Activated CD4-positive, alpha-beta T cell treated with anti-CD3 and anti-CD28 coated beads for 36 hours (primary cell): ENCODE measurements at regions of chr19 and their contacts with region 1.

Region 1: DNA sequence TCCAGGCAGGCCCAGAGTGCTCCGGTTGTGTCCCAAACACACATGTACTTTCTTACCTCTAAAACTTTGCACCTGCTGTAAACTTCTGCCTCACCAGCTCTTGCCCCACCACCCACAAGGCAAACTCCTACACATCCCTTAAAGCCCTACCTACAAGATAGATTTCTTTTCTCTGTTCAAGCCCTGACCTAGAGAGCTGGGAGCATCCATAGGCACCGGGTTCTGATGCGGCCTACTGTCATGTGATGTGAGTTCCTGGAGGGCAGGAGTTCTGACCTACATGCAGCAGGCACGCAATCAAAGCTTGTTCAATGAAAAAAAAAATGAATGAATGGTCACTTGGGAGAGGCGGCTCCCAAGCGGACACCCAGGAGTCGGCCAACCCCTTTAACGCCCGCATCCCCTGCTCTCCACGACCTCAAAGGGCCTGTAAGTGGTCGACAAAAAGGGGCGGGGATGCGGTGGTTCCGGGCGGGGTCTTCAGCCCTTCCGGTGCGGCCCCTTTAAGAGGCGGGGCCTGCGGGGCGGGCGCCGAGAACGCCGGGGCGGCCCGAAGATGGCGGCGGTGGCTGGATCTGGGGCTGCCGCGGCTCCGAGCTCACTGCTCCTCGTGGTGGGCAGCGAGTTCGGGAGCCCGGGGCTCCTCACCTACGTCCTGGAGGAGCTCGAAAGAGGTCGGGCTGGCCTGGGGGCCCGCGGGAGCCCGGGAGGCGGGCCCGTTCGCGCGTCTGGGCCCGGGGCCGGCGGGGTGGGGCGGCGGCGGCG is at the start of gene MAP1S:
- DNase-seq: peak; percentile 86
- ATAC-seq: peak; percentile 83
- H3K4me3 Mint-ChIP-seq: peak within 1 kb of the TSS; percentile 81
- H3K27ac Mint-ChIP-seq: peak within 1 kb of the TSS; percentile 88
- H3K4me1 Mint-ChIP-seq: peaks cover 35% of the 10 kb centered on the region
- H3K27me3 Mint-ChIP-seq: no peaks in the 10 kb centered on the region
- total RNA-seq, gene MAP1S: 57.6 to 79.3 TPM

Region 2: DNA sequence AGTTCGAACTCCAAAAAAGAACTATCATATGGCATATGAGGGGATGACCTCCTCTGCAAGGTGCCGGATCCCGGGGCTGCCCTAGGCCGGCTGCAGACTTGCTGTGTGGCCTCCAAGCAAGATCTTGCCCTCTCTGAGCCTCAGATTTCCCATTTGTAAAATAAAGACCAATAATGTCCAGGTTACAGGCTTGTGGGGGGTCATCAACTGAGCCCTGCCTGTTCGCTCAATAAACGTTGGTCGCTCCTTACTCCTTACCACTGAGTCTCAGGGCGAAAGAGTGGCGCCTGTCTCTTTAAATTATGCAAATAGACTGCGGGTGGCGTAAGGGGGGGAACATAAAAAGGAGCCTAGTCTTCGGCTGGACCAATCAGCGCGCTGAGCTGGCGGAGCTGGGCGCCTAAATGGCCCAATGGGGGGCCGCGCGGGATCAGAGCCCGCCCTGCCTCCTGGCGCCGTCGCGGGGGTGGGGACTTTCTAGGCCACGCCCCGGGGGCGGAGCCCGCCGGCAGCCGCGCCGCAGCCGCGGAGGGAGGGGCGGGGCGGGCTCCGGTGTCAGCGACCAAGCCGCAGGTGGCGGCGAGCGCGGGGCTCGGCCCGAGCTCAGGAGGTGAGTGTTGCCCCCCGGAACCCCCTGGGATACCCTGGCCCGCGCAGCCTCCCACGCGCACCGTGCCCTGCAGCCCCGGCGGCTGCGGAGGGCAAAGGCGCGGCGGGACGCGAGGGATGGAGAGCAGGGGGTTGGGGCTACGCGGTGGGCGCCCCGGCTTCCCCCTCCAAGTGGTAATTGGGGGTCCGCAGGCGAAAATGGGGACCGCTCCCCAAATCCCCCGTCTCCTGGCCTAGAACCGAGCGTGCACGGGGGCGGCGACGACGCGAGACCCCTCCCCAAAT is 28.3 kb after region 1 on chr19:
- CTCF ChIA-PET with region 1: interaction called, 4 read pairs
- POLR2A ChIA-PET with region 1: interaction called, 7 read pairs
- intact Hi-C with region 1: loop called (anchors 1 kb)
- DNase-seq: peak; percentile 98
- ATAC-seq: peak; percentile 90
- H3K4me3 Mint-ChIP-seq: peak overlapping the region; percentile 76
- H3K27ac Mint-ChIP-seq: peak overlapping the region; percentile 60
- H3K4me1 Mint-ChIP-seq: peaks cover 42% of the 10 kb centered on the region
- H3K27me3 Mint-ChIP-seq: no peaks in the 10 kb centered on the region

Region 3: DNA sequence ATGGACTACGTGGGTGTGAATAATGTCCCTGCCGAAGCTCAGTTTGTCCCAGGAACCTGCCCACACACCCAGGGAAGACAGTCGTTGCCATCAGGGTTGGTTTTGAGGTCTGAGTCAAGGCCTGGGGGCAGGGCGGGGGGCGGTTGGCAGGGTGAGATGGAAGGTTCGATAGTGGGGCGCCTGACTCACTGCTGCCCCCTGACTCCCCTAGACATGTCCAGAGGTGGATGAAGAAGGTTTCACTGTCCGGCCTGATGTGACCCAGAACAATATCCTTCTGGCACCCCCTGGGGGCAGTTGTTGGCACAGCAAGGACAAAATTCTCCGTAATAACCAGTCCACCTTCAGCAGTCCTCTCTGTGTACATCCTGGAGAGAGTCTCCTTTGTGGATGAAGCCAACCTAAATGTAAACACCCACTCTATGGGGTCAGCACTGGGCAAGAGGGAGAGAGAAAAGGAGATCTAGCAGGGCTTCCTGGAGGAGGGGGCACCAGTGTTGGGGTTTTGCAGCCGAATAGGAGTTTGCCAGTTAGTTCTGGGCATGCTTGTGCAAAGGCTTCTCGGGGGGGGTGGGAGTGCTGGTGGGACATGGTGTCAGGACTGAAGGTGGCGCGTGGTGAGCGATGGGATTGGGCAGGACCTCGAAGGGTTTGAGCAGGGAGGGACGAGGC is 56.3 kb after region 1 on chr19:
- CTCF ChIA-PET with region 1: no interaction called
- POLR2A ChIA-PET with region 1: no interaction called
- intact Hi-C with region 1: loop called in 1 of 2 experiments (anchors 5 kb)
- DNase-seq: peak; percentile 58
- ATAC-seq: no peak
- H3K4me3 Mint-ChIP-seq: no peak overlapping the region
- H3K27ac Mint-ChIP-seq: no peak overlapping the region
- H3K4me1 Mint-ChIP-seq: peaks cover 10% of the 10 kb centered on the region
- H3K27me3 Mint-ChIP-seq: no peaks in the 10 kb centered on the region

Region 4: DNA sequence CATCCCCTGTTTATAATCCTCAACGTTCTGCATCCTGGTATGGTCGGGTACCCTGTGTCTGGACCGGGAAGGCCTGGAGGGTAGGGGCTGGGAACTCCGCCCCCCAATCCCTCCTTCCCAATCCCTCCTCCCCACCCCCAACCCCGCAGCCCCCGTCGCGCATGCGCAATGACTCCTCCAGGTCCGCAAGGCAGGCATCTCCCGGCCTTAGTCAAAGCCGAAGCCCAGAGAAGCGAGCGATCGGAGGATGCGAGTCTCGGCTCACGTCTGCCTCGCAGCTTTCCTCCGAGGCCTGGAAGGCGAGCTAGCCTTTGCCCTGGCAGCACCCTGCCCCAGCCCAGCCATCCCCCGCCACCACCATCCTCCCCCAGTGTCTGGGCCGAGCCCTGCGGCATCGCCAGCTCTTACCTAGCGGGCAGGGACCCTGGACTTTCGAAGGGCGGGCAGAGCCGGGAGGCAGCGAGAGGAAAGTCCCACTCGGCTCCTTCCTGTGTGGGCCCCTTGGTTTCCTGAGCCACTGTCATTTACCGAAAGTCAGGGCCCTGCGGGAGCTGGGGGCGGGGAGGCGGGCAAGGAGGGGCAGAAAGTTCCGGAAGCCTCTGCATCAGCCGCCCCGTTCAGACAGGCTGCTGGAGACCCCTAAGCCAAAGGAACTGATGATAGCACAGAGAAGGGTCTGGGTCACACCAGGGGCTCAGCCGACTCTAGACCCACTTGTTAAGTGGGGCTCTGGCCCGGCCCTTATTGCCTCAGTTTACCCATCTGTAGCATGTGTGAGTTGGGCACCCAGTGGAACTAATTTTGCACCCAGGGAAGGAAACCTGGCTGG is 128.6 kb after region 1 on chr19 and contains the start of gene JAK3:
- CTCF ChIA-PET with region 1: no interaction called
- POLR2A ChIA-PET with region 1: no interaction called
- intact Hi-C with region 1: loop called in 1 of 2 experiments (anchors 1 kb)
- DNase-seq: peak; percentile 96
- ATAC-seq: peak; percentile 82
- H3K4me3 Mint-ChIP-seq: peak within 1 kb of the TSS; percentile 92
- H3K27ac Mint-ChIP-seq: peak within 1 kb of the TSS; percentile 98
- H3K4me1 Mint-ChIP-seq: peaks cover 69% of the 10 kb centered on the region
- H3K27me3 Mint-ChIP-seq: no peaks in the 10 kb centered on the region
- total RNA-seq, gene JAK3: 174 to 180 TPM

Region 5: DNA sequence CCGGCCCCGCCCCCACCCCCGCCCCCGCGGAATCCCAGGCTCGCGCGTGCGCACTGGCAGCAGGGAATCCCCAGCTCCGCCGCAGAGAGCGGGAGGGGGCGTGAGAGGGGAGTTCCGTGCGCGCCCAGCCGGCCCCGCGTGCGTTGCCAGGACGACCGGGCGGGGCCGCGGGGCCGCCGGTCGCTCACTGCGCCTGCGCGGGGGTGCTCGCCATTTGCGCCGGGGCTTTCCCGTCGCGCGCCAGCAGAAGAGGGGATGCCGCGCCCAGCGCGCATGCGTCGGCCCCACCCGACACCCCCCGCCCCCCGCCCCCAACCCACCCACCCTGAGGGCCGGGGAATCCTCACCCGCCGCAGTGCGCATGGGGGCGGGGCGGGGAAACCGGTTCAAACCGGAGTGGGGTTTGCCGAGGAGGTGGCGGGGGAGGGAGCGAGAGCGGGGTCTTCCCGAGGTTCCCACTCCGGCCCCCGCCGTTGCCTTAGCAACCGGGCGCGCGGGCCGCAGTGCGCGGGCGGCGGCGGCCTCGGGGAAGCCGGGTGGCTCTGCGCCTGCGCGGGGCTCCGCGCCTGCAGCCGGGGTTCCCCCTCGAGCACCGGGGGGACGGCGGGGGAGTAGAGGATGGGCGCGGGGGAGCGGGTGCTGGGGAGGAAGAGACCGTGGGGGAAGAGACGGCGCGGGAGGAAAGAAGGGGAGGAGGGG is 228.8 kb after region 1 on chr19:
- CTCF ChIA-PET with region 1: no interaction called
- POLR2A ChIA-PET with region 1: no interaction called
- intact Hi-C with region 1: no loop called
- DNase-seq: peak; percentile 98
- ATAC-seq: peak; percentile 61
- H3K4me3 Mint-ChIP-seq: peak overlapping the region; percentile 70
- H3K27ac Mint-ChIP-seq: no peak overlapping the region
- H3K4me1 Mint-ChIP-seq: peaks cover 50% of the 10 kb centered on the region
- H3K27me3 Mint-ChIP-seq: peaks cover 33% of the 10 kb centered on the region